ENCODE measurements at regions of chr3 and their contacts with region 1.

Region 1: GRCh38 chr3:186342197-186342596 is 19.8 kb downstream of the DGKG start:
- DNase-seq: no peak
- ATAC-seq: no peak
- H3K4me3 ChIP-seq: no peak overlapping the region
- H3K27ac ChIP-seq: no peak overlapping the region
- H3K4me1 ChIP-seq: no peaks in the 10 kb centered on the region
- H3K27me3 ChIP-seq: peaks cover 11% of the 10 kb centered on the region
- CTCF ChIP-seq: no peak

Region 2: GRCh38 chr3:186352369-186352768 is 10.2 kb after region 1 on chr3:
- CTCF ChIA-PET with region 1: interaction called, 14 read pairs
- POLR2A ChIA-PET with region 1: no interaction called
- in situ Hi-C with region 1: no loop called
- intact Hi-C with region 1: no loop called
- DNase-seq: no peak
- ATAC-seq: no peak
- H3K4me3 ChIP-seq: no peak overlapping the region
- H3K27ac ChIP-seq: no peak overlapping the region
- H3K4me1 ChIP-seq: no peaks in the 10 kb centered on the region
- H3K27me3 ChIP-seq: peaks cover 8% of the 10 kb centered on the region
- CTCF ChIP-seq: no peak

Region 3: DNA sequence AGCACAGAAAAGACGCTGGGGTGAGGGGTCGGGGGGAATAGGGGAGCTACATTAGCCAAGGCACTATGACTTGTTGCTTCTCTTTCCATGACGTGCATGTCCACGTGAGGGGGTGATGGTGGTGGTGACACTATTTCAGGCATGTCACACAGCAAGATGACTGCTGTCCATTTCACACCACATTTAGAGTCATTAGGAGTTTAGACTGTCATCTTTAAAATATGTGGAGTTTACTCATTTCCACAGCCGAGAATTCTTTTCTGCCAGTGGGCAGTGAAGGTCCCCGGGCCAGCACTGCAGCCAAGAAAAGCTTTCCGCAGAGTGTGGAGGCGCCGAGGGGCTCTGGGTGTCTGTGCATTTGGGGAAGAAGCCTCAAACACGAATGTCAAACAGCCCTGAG is 20.8 kb after region 1 on chr3:
- CTCF ChIA-PET with region 1: no interaction called
- POLR2A ChIA-PET with region 1: interaction called, 13 read pairs
- in situ Hi-C with region 1: no loop called
- intact Hi-C with region 1: no loop called
- DNase-seq: no peak
- ATAC-seq: no peak
- H3K4me3 ChIP-seq: no peak overlapping the region
- H3K27ac ChIP-seq: no peak overlapping the region
- H3K4me1 ChIP-seq: peaks cover 7% of the 10 kb centered on the region; the same call in 1 of the 2 replicates
- H3K27me3 ChIP-seq: peaks cover 67% of the 10 kb centered on the region
- CTCF ChIP-seq: no peak

Region 4: DNA sequence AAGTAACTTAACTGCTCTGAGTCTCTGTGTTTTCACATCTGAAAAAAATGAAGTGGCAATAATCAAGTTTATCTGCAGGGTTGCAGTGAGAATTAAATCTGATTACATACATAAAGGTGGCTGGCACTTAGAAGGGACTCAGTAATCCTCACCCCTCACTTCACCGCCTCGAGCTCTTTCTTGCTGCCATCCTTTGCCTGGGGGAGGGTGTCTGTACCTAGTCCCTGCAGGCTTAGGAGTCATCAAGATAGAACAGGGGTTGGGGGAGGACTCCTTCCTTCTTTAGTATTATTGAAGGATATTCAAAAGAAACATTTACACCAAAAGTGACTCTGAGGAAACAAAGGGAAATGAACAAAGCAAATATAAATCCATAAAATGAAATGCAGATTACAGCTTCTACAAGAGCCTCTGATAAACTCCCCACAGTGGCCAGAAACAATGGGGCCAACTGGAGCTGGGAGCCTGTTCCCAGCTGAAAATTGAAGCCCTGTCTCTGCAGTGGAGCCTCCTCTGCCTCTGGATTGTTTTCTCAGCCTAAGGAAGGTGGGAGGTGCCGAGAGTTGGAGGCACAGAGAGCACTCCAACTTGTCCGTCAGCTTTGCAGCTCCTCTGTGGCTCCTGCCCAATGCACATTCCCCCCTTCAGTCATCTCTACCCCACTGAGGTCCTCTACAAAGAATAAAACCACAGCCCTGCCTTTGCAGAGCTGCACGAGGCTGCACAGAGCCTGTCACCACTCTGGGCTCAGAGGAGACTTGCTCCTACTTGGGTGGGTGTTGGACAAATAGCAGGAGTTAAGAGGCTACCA is 160.1 kb after region 1 on chr3:
- CTCF ChIA-PET with region 1: no interaction called
- POLR2A ChIA-PET with region 1: interaction called, 10 read pairs
- in situ Hi-C with region 1: no loop called
- intact Hi-C with region 1: no loop called
- DNase-seq: no peak
- ATAC-seq: peak; percentile 82
- H3K4me3 ChIP-seq: peak overlapping the region in 1 of 2 experiments; percentile 11; a peak in 1 of 4 replicates
- H3K27ac ChIP-seq: no peak overlapping the region
- H3K4me1 ChIP-seq: no peaks in the 10 kb centered on the region
- H3K27me3 ChIP-seq: peaks cover 32% of the 10 kb centered on the region
- CTCF ChIP-seq: no peak

Region 5: GRCh38 chr3:186530415-186530814 is 188.2 kb after region 1 on chr3:
- CTCF ChIA-PET with region 1: no interaction called
- POLR2A ChIA-PET with region 1: interaction called, 13 read pairs
- in situ Hi-C with region 1: no loop called
- intact Hi-C with region 1: no loop called
- DNase-seq: no peak
- ATAC-seq: no peak
- H3K4me3 ChIP-seq: no peak overlapping the region
- H3K27ac ChIP-seq: no peak overlapping the region
- H3K4me1 ChIP-seq: no peaks in the 10 kb centered on the region
- H3K27me3 ChIP-seq: peaks cover 9% of the 10 kb centered on the region
- CTCF ChIP-seq: no peak

Measured in Panc1 (cell line).